ENCODE measurements at regions of chr3 and their contacts with region 1.

Region 1: DNA sequence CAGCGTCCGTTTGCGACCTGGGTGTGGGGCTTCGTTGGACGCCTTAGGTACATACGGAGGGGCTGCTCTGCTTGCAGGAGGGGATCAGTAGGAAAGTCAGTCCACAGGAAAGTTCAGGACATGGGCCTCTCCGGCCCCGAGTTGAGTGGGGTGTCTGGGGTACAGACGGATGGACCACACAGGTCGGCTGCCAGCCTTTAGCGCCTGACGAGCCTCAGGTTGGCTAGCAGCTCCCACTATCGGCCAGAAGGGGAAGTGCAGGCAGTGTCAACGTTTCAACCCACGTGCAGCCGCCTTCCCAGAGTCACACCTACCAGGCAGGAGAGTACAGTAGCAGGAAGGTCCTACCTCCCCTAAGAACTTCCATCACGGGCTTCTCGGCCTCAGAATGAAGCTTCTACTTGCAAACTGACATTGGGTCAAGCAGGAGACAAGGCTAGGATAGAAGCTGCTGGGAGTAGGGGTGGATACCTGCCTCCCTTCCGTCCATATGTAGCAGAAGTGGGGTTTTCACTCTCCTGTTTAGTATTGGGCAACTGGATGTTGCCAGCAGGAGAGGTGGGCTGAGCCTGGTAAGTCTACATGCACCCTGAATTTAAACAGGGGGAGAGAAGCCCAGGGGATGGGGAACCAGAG is 1.8 kb upstream of the SCN5A start:
- DNase-seq: peak; percentile 62 to 79 (median 71)
- ATAC-seq: peak; percentile 26 to 48 (median 45)
- H3K4me3 ChIP-seq: no peak overlapping the region
- H3K27ac ChIP-seq: peak overlapping the region in 1 of 12 donors; percentile 97
- H3K4me1 ChIP-seq: peaks cover 0 to 39% (median 6%) of the 10 kb centered on the region in 12 donors
- H3K27me3 ChIP-seq: peaks cover 0 to 43% (median 12%) of the 10 kb centered on the region in 9 donors
- CTCF ChIP-seq: peak; percentile 95 to 99 (median 97)
- POLR2A ChIP-seq: no peak

Region 2: GRCh38 chr3:38496131-38496910 is 155.0 kb before region 1 on chr3 and contains the start of gene EXOG:
- intact Hi-C with region 1: loop called in 8 of 10 experiments (anchors 1 to 10 kb)
- DNase-seq: peak; percentile 95 to 98 (median 96)
- ATAC-seq: peak; percentile 79 to 94 (median 92)
- H3K4me3 ChIP-seq: peak within 1 kb of the TSS; percentile 58 to 97 (median 70)
- H3K27ac ChIP-seq: peak within 1 kb of the TSS; percentile 53 to 92 (median 86)
- H3K4me1 ChIP-seq: peaks cover 0 to 33% (median 11%) of the 10 kb centered on the region in 12 donors
- H3K27me3 ChIP-seq: no peaks in the 10 kb centered on the region
- CTCF ChIP-seq: peak; percentile 88 to 98 (median 92)
- POLR2A ChIP-seq: peak in 1 of 2 donors; percentile 46
- total RNA-seq, gene EXOG: 18.3 to 35.6 (median 25.0) TPM

Region 3: DNA sequence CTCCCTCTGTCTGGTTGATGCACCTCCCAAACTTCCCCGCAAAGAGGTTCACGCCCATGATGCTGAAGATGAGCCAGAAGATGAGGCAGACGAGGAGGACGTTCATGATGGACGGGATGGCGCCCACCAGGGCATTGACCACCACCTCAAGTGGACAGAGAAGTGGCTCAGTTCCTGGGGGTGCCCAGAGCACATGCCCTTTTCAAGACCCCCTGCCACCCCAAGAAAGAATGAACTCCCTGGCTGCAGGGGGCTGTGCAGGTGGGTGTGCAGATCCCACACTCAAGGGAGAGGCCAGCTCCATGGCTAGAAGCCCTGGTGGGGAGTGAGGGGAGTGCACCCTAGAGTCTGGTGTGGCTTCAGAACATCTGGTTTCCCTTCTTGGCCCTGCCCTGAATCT is 91.0 kb before region 1 on chr3:
- intact Hi-C with region 1: no loop called
- DNase-seq: peak in 1 of 5 donors; percentile 12
- ATAC-seq: no peak
- H3K4me3 ChIP-seq: no peak overlapping the region
- H3K27ac ChIP-seq: no peak overlapping the region
- H3K4me1 ChIP-seq: peaks cover 0 to 7% (median 0%) of the 10 kb centered on the region in 12 donors
- H3K27me3 ChIP-seq: no peaks in the 10 kb centered on the region
- CTCF ChIP-seq: peak in 2 of 12 donors; percentile 12 to 30
- POLR2A ChIP-seq: no peak

Region 4: DNA sequence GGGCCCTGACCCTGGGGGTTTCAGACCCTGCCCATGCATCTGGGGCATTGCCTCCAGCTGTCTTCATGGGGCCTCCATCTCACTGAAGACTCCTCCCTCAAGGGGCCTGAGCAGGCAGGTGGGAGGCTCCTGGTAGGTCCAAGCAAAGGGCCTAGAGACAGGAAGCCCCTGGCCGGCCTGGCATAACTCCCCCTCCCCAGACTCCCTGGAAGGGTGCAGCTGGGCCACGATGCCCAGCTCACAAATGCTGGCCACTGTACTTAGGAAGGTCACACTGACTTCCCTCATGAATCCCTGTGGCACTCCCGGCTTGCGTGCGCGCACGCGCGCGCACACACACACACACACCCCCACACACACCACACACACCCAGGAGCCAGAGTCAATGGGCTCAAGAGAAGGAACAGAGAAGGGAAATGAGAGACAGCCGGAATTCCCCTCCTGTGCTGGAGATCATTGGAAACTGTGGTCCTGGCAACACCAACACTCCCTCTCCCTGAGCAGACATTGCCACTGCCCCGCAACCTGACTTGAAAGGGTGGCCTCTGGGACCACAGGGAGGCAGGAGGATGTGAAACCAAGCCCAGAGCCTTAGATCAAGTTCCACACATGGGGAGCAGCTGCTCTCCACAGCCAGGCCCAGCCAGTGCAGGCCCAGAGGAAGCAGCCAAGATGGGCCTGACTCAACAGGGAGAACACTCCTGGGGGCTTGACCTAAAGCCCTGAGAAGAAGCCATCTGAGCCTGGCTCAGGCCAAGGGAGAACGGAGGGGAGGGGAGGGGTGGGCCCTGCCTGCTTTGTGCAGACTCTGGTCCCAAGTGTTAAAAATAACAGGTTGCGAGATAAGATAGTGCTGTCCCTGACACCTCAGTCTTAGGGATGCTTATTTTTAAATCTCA is 71.5 kb before region 1 on chr3:
- intact Hi-C with region 1: loop called in 3 of 10 experiments (anchors 5 kb)
- DNase-seq: peak; percentile 63 to 85 (median 75)
- ATAC-seq: peak; percentile 73 to 79 (median 75)
- H3K4me3 ChIP-seq: no peak overlapping the region
- H3K27ac ChIP-seq: peak overlapping the region in 11 of 12 donors; percentile 71 to 99 (median 89)
- H3K4me1 ChIP-seq: peaks cover 0 to 85% (median 36%) of the 10 kb centered on the region in 12 donors
- H3K27me3 ChIP-seq: no peaks in the 10 kb centered on the region
- CTCF ChIP-seq: no peak
- POLR2A ChIP-seq: peak in 1 of 2 donors; percentile 0

Region 5: DNA sequence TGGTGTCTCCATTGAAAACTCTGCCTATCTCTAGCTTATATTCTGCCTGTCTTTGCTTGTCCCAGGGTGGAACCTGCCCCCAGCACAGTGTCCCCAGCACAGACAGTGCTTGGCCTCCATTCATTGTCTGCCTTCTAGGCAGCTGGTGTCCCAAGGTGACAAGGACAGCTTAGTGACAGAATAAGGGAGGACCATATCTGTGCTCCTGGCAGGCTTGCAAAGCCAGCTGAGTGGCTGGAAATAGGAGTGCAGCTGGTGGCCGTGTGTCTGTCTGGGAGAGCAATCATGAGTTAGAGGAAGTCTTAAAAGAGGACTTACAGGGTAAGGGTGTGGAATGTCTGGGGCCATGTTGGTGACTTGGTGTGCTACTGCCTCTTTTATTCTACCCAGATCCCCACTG is 35.2 kb before region 1 on chr3:
- intact Hi-C with region 1: loop called in 1 of 10 experiments (anchors 2 kb)
- DNase-seq: peak in 4 of 5 donors; percentile 64 to 84 (median 73)
- ATAC-seq: peak; percentile 76 to 94 (median 84)
- H3K4me3 ChIP-seq: no peak overlapping the region
- H3K27ac ChIP-seq: peak overlapping the region; percentile 37 to 95 (median 78)
- H3K4me1 ChIP-seq: peaks cover 0 to 61% (median 31%) of the 10 kb centered on the region in 12 donors
- H3K27me3 ChIP-seq: no peaks in the 10 kb centered on the region
- CTCF ChIP-seq: peak in 1 of 12 donors; percentile 7
- POLR2A ChIP-seq: no peak

Region 6: GRCh38 chr3:38843898-38844297 is 192.6 kb after region 1 on chr3:
- intact Hi-C with region 1: loop called in 4 of 10 experiments (anchors 10 kb)
- DNase-seq: peak in 2 of 5 donors; percentile 16 to 26
- ATAC-seq: peak in 3 of 4 donors; percentile 85 to 94 (median 93)
- H3K4me3 ChIP-seq: no peak overlapping the region
- H3K27ac ChIP-seq: no peak overlapping the region
- H3K4me1 ChIP-seq: no peaks in the 10 kb centered on the region
- H3K27me3 ChIP-seq: no peaks in the 10 kb centered on the region
- CTCF ChIP-seq: peak; percentile 18 to 60 (median 53)
- POLR2A ChIP-seq: no peak